HCT116 (cell line): ENCODE measurements at regions of chr1 and their contacts with region 1.

Region 1: DNA sequence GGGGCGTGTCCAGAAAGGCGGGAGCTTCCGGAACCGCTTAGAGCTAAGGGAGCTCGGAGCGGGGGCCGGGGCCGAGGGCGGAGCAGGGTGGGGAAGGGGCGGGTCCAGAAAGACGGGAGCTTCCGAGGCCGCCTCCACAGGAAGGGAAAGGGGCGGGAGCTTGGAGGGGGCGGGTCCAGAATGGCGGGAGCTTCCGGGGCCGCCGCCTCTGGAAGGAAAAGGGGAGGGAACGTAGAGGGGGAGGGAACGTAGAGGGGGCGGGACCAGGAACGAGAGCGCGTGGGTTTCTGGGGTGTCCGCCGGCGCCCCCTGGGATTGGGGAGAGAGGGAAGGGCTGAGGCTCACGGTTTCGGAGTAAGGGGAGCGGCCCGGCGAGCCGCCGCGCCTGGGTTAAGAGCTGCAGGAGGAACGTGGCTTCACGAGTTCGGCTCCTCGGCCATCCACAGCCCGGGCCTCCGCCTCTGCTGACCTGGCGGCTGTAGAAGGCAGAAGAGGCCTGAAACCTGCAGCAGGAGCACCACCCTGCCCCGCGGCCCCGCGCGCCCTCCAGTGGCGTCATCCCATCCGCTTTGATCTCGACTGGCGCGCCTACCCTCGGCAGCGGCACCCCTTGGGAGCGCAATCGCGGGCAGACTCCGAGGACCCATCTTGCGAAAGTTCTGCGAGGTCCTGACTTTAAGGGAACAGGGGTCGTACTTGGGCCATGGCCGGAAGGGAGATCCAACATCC is 22.9 kb upstream of the HPDL start:
- DNase-seq: peak; percentile 94
- ATAC-seq: peak; percentile 89
- H3K4me3 ChIP-seq: peak overlapping the region; percentile 69 to 70
- H3K27ac ChIP-seq: peak overlapping the region; percentile 82
- H3K4me1 ChIP-seq: peaks cover 12 to 41% of the 10 kb centered on the region in 2 experiments
- H3K27me3 ChIP-seq: no peaks in the 10 kb centered on the region
- CTCF ChIP-seq: peak; percentile 52 to 95 (median 58)
- POLR2A ChIP-seq: peak; percentile 61
- RAD21 ChIP-seq: peak; percentile 83

Region 2: DNA sequence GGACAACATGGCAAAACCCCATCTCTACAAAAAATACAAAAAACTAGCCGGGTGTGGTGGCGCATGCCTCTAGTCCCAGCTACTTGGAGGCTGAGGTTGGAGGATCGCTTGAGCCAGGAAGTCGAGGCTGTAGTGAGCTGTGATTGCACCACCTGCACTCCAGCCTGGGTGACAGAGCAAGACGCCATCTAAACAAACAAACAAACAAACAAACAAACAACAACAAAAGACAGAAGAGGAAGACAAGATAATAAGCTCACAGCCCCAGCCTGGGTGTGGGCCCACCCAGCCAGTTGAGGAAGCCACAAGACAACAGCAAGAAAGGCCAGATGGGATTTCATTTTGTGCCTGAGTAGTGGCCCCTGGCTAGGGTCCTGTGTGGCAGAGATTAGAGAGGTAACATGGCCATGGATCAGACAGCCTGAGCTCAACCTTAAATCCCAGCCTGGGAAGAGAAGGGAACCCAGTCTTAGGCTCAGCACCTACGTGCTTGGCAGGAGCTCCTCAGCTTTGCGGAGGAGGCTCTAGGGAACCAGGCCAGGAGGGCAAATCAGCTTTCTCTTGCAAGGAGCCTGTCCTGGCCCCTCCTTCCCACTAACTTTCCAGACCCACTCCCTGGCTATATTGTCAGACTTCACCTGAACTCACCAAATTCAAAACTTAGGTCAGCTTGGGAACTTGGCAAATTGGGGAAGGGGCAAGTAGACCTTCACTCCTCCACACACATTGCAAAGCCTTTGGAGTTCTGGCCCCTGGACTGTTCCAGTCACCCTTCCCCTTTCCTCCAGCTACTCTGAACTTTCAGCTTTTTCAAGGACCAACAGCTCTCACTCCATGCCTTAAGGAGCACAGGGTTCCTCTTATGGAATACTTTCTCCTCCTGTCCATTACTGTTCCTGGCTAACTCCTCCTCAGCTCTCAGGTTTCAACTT is 510.7 kb before region 1 on chr1:
- CTCF ChIA-PET with region 1: interaction called, 5 read pairs
- POLR2A ChIA-PET with region 1: no interaction called
- RAD21 ChIA-PET with region 1: no interaction called
- intact Hi-C with region 1: loop called (anchors 5 kb)
- DNase-seq: no peak
- ATAC-seq: no peak
- H3K4me3 ChIP-seq: peak overlapping the region in 1 of 2 experiments; percentile 8; a peak in 1 of 4 replicates
- H3K27ac ChIP-seq: peak overlapping the region; percentile 58
- H3K4me1 ChIP-seq: peaks cover 14 to 30% of the 10 kb centered on the region in 2 experiments; a peak in 3 of 4 replicates
- H3K27me3 ChIP-seq: no peaks in the 10 kb centered on the region
- CTCF ChIP-seq: no peak
- POLR2A ChIP-seq: no peak
- RAD21 ChIP-seq: no peak

Region 3: GRCh38 chr1:44835738-44836675 is 467.7 kb before region 1 on chr1:
- CTCF ChIA-PET with region 1: interaction called, 7 read pairs
- POLR2A ChIA-PET with region 1: no interaction called
- RAD21 ChIA-PET with region 1: no interaction called
- intact Hi-C with region 1: loop called (anchors 2 kb)
- DNase-seq: peak; percentile 77
- ATAC-seq: peak; percentile 94
- H3K4me3 ChIP-seq: no peak overlapping the region
- H3K27ac ChIP-seq: no peak overlapping the region
- H3K4me1 ChIP-seq: peaks cover 0 to 10% of the 10 kb centered on the region in 2 experiments; a peak in 1 of 4 replicates
- H3K27me3 ChIP-seq: no peaks in the 10 kb centered on the region
- CTCF ChIP-seq: peak; percentile 63 to 90 (median 90)
- POLR2A ChIP-seq: no peak
- RAD21 ChIP-seq: peak; percentile 88

Region 4: DNA sequence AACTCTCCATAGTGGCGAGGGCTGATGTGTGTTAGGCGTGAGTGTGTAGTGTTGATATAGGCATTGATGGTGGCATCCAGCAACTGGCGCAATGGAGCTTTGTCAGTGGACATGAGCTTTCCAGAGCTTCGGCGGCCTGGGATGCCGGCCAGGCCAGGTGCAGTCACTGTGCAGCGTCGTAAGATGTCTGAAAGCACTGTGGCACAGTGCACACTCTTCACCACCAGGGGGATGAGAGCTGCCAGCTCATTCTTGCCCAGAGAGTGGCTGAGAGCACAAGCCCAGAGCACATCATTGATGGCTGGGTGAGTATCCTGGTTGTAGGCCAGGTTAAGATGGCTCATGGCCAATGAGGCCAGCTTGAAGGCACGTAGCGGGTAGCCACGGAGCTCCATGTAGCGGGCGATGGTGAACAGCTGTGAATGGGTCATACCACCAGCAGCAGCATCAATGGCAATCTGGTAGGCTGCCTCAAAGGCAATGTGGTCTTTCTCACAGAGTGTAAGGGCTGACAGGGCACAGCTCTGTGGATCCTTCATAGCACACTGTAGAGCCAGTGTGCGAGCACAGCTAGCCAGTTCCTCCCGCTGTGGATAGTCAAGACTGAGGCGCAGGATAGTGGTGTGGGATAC is 285.0 kb before region 1 on chr1:
- CTCF ChIA-PET with region 1: interaction called, 214 read pairs
- POLR2A ChIA-PET with region 1: interaction called, 35 read pairs
- RAD21 ChIA-PET with region 1: interaction called, 5 to 9 read pairs
- intact Hi-C with region 1: loop called (anchors 1 kb)
- DNase-seq: peak; percentile 41
- ATAC-seq: peak; percentile 96
- H3K4me3 ChIP-seq: no peak overlapping the region
- H3K27ac ChIP-seq: no peak overlapping the region
- H3K4me1 ChIP-seq: no peaks in the 10 kb centered on the region
- H3K27me3 ChIP-seq: no peaks in the 10 kb centered on the region
- CTCF ChIP-seq: peak; percentile 83 to 93 (median 84)
- POLR2A ChIP-seq: no peak
- RAD21 ChIP-seq: peak; percentile 86

Region 5: GRCh38 chr1:45339789-45340570 is 36.2 kb after region 1 on chr1 and contains the starts of genes MUTYH and TOE1:
- CTCF ChIA-PET with region 1: interaction called, 3 read pairs
- POLR2A ChIA-PET with region 1: interaction called, 8 read pairs
- RAD21 ChIA-PET with region 1: no interaction called
- intact Hi-C with region 1: loop called (anchors 2 kb)
- DNase-seq: peak; percentile 79
- ATAC-seq: peak; percentile 90
- H3K4me3 ChIP-seq: peak within 1 kb of the TSS; percentile 93 to 94
- H3K27ac ChIP-seq: peak within 1 kb of the TSS; percentile 82
- H3K4me1 ChIP-seq: peaks cover 21 to 50% of the 10 kb centered on the region in 2 experiments
- H3K27me3 ChIP-seq: no peaks in the 10 kb centered on the region
- CTCF ChIP-seq: no peak
- POLR2A ChIP-seq: peak; percentile 46
- RAD21 ChIP-seq: no peak
- total RNA-seq, gene MUTYH: 44.8 TPM
- total RNA-seq, gene TOE1: 11.5 TPM

Region 6: DNA sequence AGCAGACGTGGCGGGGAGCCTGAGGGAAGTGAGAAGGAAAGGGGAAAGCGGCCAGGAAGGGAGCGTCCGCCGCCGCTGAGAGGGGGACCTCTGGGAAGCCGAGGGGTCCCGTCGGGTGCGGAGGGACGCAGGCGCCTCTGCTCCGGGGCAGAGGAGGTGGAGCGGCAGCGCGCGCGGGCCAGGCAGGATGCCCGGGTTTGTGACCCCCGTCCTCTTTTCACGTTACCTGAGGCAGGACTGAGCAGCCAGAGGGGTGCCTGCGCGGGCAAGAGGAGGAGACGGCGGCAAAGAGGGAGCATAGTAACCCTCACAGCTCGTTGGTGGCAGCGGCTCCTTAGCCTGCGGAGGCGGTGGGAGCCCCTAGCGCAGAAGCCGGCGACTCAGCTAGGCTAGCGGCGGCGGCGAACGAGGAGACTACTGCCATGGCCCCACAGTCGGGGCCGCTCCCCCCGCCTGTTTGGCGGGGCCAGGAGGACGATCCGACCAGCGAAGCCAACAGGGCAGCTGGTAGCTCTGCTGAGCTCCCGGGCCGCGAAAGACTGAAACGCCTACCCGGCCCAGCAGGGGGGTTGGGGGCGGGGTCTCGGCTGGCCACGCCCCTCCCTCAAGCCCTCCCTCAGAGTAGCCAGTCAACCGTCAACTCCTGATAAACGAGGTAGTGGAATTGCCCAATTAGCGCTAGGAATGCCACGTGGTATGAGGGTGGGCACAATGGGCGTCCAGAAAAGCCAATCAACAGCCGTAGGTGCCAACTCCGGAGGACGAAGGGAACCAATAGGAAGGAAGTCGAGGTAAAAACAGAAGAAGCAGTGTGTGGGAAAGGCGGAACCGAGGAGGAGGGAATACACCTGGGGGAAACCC is 187.1 kb after region 1 on chr1 and contains the start of gene TESK2:
- CTCF ChIA-PET with region 1: interaction called, 12 read pairs
- POLR2A ChIA-PET with region 1: interaction called, 8 read pairs
- RAD21 ChIA-PET with region 1: interaction called in 1 of 2 experiments, 9 read pairs
- intact Hi-C with region 1: loop called (anchors 1 kb)
- DNase-seq: peak; percentile 100
- ATAC-seq: peak; percentile 94
- H3K4me3 ChIP-seq: peak within 1 kb of the TSS; percentile 73 to 75
- H3K27ac ChIP-seq: peak within 1 kb of the TSS; percentile 19; the same call in 1 of the 2 replicates
- H3K4me1 ChIP-seq: peaks cover 12 to 18% of the 10 kb centered on the region in 2 experiments
- H3K27me3 ChIP-seq: no peaks in the 10 kb centered on the region
- CTCF ChIP-seq: no peak
- POLR2A ChIP-seq: no peak
- RAD21 ChIP-seq: 0 out of 2 replicates have a peak, but pooled peaks have one; percentile 7
- total RNA-seq, gene TESK2: 5.0 TPM